HEK293 (cell line): ENCODE measurements at regions of chr2 and their contacts with region 1.

Region 1: GRCh38 chr2:21042958-21043743 is 722 bp downstream of the APOB start:
- H3K4me3 ChIP-seq: no peak overlapping the region
- H3K27ac ChIP-seq: no peak overlapping the region
- H3K4me1 ChIP-seq: no peaks in the 10 kb centered on the region
- CTCF ChIP-seq: peak; percentile 74

Region 2: DNA sequence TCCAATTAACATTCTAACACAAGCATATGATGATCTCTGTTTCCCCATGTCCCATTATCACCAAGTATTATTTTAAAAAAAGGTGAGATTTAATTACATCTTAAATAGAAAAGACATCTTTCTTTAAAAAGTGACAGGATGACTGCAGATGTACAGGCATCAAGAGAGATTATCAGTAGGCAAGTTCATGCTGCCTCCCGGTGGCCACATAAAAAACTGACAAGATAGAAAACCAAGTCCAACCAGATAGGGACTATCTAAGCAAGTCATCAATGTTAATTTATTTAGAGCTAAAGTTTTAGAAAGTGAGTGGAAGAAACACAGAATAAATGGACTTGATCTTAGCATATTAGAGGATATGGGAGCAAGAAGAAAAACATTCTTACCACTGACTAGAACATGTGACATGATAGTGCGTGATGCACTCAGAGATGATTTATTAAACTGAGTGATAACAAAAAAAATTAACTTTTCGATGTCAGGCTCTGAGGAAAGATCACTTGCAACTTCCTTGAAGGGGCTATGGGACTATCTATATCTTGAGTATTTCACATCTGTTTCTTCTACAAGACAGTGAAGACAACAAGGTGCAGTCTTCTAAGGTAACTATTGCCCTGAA is 75.3 kb after region 1 on chr2:
- CTCF ChIA-PET with region 1: interaction called, 19 read pairs
- POLR2A ChIA-PET with region 1: no interaction called
- H3K4me3 ChIP-seq: no peak overlapping the region
- H3K27ac ChIP-seq: no peak overlapping the region
- H3K4me1 ChIP-seq: no peaks in the 10 kb centered on the region
- CTCF ChIP-seq: 0 out of 2 replicates have a peak, but pooled peaks have one; percentile 19